A673 (cell line): ENCODE measurements at regions of chr7 and their contacts with region 1.

Region 1: DNA sequence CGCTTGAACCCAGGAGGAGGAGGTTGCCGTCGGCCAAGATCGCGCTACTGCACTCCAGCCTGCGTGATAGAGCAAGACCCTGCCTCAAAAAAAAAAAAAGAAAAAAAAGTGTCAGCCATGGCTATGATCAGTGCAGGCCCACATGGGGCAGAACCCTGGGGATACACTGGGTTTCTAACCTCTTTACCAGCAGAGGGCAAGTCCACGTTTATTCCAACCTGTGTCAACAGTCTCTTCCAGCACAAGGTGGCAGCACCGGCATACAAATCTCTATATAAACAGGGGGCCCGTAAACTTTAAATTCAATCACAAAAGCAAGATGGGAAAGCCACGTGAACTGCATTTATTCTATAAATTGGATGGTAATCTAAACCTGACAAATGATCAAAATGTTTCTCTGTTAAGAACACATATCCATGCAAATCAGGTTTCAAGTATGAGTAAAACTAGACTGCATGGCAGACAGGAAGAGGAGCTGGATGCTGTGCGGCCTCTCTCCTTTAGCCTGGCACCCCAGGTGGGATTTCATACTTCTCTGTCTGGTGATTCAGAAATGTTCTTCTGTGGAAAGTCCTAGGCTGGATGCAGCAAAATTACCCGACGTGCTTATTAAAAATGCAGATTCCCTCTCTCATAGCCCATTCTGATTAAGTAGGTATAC is 60.0 kb upstream of the STEAP1B start:
- DNase-seq: peak; percentile 84
- H3K4me3 ChIP-seq: no peak overlapping the region
- H3K27ac ChIP-seq: no peak overlapping the region
- H3K4me1 ChIP-seq: no peaks in the 10 kb centered on the region
- H3K27me3 ChIP-seq: no peaks in the 10 kb centered on the region
- CTCF ChIP-seq: peak; percentile 94

Region 2: DNA sequence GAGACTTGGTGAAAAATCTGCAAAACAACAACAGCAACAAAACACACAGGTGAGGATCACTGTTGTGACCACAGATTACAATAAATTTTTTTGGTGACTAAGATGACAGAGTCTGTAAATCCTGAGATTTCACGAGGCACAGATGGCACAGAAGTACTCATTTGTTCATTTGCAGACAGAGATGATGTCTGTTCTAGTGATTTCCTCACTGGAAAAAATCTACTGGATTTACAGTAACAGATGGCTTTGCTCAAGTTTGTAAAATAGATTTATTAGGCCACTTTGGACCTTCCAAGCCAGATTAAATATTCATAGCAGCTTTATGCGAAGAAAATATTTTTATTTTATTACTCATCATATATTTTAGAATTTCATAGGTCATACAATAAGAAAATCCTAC is 53.5 kb after region 1 on chr7:
- CTCF ChIA-PET with region 1: no interaction called
- POLR2A ChIA-PET with region 1: no interaction called
- intact Hi-C with region 1: no loop called
- DNase-seq: no peak
- H3K4me3 ChIP-seq: no peak overlapping the region
- H3K27ac ChIP-seq: no peak overlapping the region
- H3K4me1 ChIP-seq: no peaks in the 10 kb centered on the region
- H3K27me3 ChIP-seq: no peaks in the 10 kb centered on the region
- CTCF ChIP-seq: no peak

Region 3: GRCh38 chr7:22726345-22727185 is 166.6 kb after region 1 on chr7:
- CTCF ChIA-PET with region 1: interaction called, 14 read pairs
- POLR2A ChIA-PET with region 1: no interaction called
- intact Hi-C with region 1: loop called (anchors 1 kb)
- DNase-seq: peak; percentile 76
- H3K4me3 ChIP-seq: peak overlapping the region; percentile 31
- H3K27ac ChIP-seq: no peak overlapping the region
- H3K4me1 ChIP-seq: peaks cover 18% of the 10 kb centered on the region
- H3K27me3 ChIP-seq: no peaks in the 10 kb centered on the region
- CTCF ChIP-seq: peak; percentile 68